ENCODE measurements at regions of chr1 and their contacts with region 1.

Region 1: GRCh38 chr1:222654849-222655248 is 37.0 kb downstream of the MIA3 start:
- DNase-seq: peak in 8 of 9 donors; percentile 62 to 89 (median 83)
- ATAC-seq: peak; percentile 99
- H3K4me3 ChIP-seq: peak overlapping the region; percentile 21
- H3K4me3 Mint-ChIP-seq: peak overlapping the region; percentile 38 to 81 (median 70)
- H3K27ac ChIP-seq: peak overlapping the region; percentile 82
- H3K27ac Mint-ChIP-seq: peak overlapping the region; percentile 85 to 96 (median 94)
- H3K4me1 ChIP-seq: peaks cover 25 to 33% of the 10 kb centered on the region in 2 donors
- H3K4me1 Mint-ChIP-seq: peaks cover 34 to 67% (median 60%) of the 10 kb centered on the region in 7 donors
- H3K27me3 ChIP-seq: no peaks in the 10 kb centered on the region
- H3K27me3 Mint-ChIP-seq: no peaks in the 10 kb centered on the region

Region 2: DNA sequence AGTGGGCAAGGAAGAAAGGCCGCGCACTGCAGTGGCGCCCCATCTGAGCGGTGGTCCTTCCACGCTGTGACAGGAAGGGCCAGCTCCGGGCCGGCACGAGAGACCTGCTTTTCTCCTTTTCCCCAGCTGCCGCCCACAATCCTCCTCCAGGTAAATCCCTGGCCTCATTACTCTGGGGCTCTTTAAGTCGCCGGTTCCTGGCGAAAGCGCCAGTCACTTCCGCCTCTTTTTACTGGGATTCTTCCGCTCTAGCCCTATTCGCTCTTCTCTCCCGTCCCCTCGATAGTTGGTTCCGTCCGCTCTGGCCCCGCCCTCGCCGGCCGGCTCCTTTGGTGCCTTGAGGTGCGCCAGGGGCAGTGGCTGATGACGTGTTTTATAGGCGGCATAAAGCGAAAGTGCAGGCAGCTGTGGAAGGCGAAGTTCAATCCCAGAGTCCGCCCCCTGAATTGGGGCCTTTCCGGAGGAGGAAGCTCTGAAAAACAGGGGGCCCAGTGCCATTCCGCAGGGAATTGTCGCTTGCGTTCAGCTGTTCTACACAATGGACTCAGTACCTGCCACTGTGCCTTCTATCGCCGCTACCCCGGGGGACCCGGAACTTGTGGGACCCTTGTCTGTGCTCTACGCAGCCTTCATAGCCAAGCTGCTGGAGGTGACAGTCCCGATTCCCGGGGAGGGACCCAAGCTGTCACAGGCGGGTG is 10.8 kb before region 1 on chr1:
- CTCF ChIA-PET with region 1: no interaction called
- POLR2A ChIA-PET with region 1: interaction called, 29 read pairs
- intact Hi-C with region 1: loop called (anchors 1 kb)
- DNase-seq: peak; percentile 93 to 98 (median 96)
- ATAC-seq: peak; percentile 97
- H3K4me3 ChIP-seq: peak overlapping the region; percentile 99
- H3K4me3 Mint-ChIP-seq: peak overlapping the region; percentile 87 to 99 (median 97)
- H3K27ac ChIP-seq: peak overlapping the region; percentile 92
- H3K27ac Mint-ChIP-seq: peak overlapping the region; percentile 95 to 99 (median 98)
- H3K4me1 ChIP-seq: peaks cover 12% of the 10 kb centered on the region in 2 donors
- H3K4me1 Mint-ChIP-seq: peaks cover 12 to 59% (median 49%) of the 10 kb centered on the region in 7 donors
- H3K27me3 ChIP-seq: no peaks in the 10 kb centered on the region
- H3K27me3 Mint-ChIP-seq: no peaks in the 10 kb centered on the region

Region 3: DNA sequence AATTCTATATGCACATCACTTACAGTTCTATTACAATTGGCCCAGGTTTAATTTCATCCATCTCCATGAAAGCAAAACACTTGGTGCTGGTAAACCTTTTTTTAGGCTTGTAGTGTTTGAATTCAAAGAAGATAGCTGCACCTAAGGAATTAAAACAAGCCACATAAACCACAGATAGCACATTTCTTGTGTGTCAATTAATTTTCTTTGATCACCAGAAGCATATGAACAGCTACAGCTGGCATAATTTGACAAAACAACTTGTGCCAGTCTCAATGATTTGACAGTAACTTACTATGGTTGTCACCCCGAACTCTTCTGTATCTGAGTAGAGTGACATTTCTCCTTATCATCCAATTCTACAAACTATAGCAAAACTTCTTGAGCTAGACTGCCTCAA is 15.3 kb after region 1 on chr1:
- CTCF ChIA-PET with region 1: interaction called, 3 read pairs
- POLR2A ChIA-PET with region 1: interaction called, 6 read pairs
- intact Hi-C with region 1: loop called in 1 of 2 experiments (anchors 2 kb)
- DNase-seq: peak in 4 of 9 donors; percentile 22 to 48 (median 32)
- ATAC-seq: peak; percentile 31
- H3K4me3 ChIP-seq: no peak overlapping the region
- H3K4me3 Mint-ChIP-seq: peak overlapping the region in 7 of 10 donors; percentile 6 to 68 (median 49)
- H3K27ac ChIP-seq: peak overlapping the region; percentile 28
- H3K27ac Mint-ChIP-seq: peak overlapping the region; percentile 65 to 91 (median 89)
- H3K4me1 ChIP-seq: peaks cover 0 to 10% of the 10 kb centered on the region in 2 donors
- H3K4me1 Mint-ChIP-seq: peaks cover 15 to 32% (median 26%) of the 10 kb centered on the region in 7 donors
- H3K27me3 ChIP-seq: no peaks in the 10 kb centered on the region
- H3K27me3 Mint-ChIP-seq: no peaks in the 10 kb centered on the region

Region 4: GRCh38 chr1:223074445-223075300 is 419.8 kb after region 1 on chr1:
- CTCF ChIA-PET with region 1: no interaction called
- POLR2A ChIA-PET with region 1: no interaction called
- intact Hi-C with region 1: no loop called
- DNase-seq: no peak
- ATAC-seq: no peak
- H3K4me3 ChIP-seq: no peak overlapping the region
- H3K4me3 Mint-ChIP-seq: no peak overlapping the region
- H3K27ac ChIP-seq: no peak overlapping the region
- H3K27ac Mint-ChIP-seq: no peak overlapping the region
- H3K4me1 ChIP-seq: no peaks in the 10 kb centered on the region
- H3K4me1 Mint-ChIP-seq: no peaks in the 10 kb centered on the region
- H3K27me3 ChIP-seq: no peaks in the 10 kb centered on the region
- H3K27me3 Mint-ChIP-seq: peaks cover 2 to 12% (median 7%) of the 10 kb centered on the region in 5 donors